Calu3 (cell line): ENCODE measurements at regions of chr6 and their contacts with region 1.

Region 1: GRCh38 chr6:151269321-151269995 is 29.7 kb downstream of the AKAP12 start:
- DNase-seq: no peak
- H3K4me3 Mint-ChIP-seq: no peak overlapping the region
- H3K27ac Mint-ChIP-seq: no peak overlapping the region
- H3K4me1 Mint-ChIP-seq: no peaks in the 10 kb centered on the region
- H3K27me3 Mint-ChIP-seq: no peaks in the 10 kb centered on the region
- CTCF ChIP-seq: no peak

Region 2: DNA sequence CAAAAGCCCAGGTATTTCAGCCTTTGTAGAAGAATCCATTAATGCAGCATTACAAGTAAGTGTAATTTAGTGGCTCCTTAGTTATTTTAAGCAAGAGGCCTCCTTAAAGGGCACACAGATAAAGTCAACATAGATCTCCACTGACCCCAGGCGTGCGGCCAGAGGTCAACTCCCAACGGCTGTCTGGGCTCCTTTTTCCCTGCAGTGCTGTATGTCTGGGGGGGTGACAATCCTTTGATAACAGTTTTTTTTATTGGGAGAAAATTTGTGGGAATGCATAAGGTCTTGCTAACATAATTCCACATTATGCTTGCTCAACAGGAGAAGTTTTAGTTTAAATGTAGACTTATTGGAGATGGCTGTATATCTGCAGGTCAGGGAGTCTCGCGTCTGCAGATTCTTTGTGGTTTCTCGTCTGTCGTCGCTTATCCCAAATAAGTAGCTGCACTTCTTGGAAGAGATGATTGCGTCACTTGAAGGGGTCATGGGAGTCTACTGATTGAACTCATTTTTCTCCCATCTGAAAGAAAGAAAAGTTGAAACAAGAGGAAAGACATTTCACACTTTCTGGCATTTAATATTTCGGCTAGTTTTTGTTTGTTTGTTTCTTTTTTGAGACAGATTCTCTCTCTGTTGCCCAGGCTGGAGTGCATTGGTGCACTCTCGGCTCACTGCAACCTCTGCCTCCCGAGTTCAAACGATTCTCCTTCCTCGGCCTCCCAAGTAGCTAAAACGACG is 181.4 kb before region 1 on chr6:
- CTCF ChIA-PET with region 1: no interaction called
- intact Hi-C with region 1: no loop called
- DNase-seq: no peak
- H3K4me3 Mint-ChIP-seq: no peak overlapping the region
- H3K27ac Mint-ChIP-seq: no peak overlapping the region
- H3K4me1 Mint-ChIP-seq: peaks cover 25% of the 10 kb centered on the region
- H3K27me3 Mint-ChIP-seq: no peaks in the 10 kb centered on the region
- CTCF ChIP-seq: no peak

Region 3: GRCh38 chr6:151113641-151114040 is 155.8 kb before region 1 on chr6:
- CTCF ChIA-PET with region 1: interaction called, 14 read pairs
- intact Hi-C with region 1: no loop called
- DNase-seq: no peak
- H3K4me3 Mint-ChIP-seq: no peak overlapping the region
- H3K27ac Mint-ChIP-seq: no peak overlapping the region
- H3K4me1 Mint-ChIP-seq: no peaks in the 10 kb centered on the region
- H3K27me3 Mint-ChIP-seq: no peaks in the 10 kb centered on the region
- CTCF ChIP-seq: no peak

Region 4: GRCh38 chr6:151240036-151240685 is 29.3 kb before region 1 on chr6:
- CTCF ChIA-PET with region 1: interaction called, 10 read pairs
- intact Hi-C with region 1: no loop called
- DNase-seq: peak; percentile 49
- H3K4me3 Mint-ChIP-seq: peak overlapping the region; percentile 80
- H3K27ac Mint-ChIP-seq: no peak overlapping the region
- H3K4me1 Mint-ChIP-seq: peaks cover 11% of the 10 kb centered on the region
- H3K27me3 Mint-ChIP-seq: no peaks in the 10 kb centered on the region
- CTCF ChIP-seq: no peak